ENCODE measurements at regions of chr13 and their contacts with region 1.

Region 1: DNA sequence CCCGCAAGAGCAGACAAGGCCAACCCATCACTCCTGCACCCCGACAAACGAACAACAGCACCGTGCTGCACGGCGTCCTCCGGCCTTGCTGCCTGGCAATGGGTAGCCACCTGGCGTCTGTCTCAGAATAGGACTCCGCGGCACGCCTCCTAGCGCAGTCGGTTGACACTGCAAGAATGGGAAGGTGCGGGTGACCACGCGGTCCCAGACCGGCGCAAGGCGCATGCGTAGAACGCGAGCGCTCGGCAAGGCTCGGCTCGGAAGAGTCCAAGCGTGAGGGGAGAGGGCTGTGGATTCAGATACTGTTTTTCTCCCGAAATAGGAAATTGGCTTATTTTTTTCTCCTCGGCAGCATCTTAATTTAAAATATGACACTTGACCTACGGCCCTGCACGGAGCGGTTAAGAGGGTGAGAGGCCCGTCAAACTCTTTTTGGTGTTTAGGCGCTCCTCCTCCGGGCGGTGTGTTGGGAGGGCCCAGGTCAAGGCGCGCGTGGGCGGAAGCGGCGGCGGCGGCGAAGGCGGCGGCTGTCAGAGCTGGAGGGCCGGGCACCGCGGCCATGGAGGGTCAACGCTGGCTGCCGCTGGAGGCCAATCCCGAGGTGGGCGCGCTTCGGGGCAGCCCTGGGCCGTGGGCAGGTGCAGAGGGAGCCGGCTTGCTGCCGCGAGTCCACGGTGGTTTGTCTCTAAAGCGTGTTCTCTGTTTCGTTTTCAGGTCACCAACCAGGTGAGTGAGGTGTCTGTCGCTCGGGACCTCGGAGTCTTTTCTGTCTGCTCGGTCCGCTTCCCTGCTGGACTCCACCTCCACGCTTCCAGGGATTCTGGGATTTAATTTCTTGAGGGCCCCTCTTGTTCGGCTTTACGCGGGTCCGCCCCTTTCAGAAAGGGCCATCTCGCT is at the start of gene UCHL3:
- DNase-seq: peak; percentile 89 to 94
- ATAC-seq: peak; percentile 99
- H3K4me3 ChIP-seq: peak within 1 kb of the TSS; percentile 82 to 98 (median 96)
- H3K27ac ChIP-seq: peak within 1 kb of the TSS; percentile 79 to 95 (median 94)
- H3K4me1 ChIP-seq: peaks cover 28 to 36% of the 10 kb centered on the region in 2 donors
- H3K27me3 ChIP-seq: no peaks in the 10 kb centered on the region
- CTCF ChIP-seq: peak; percentile 77 to 88 (median 84)
- POLR2A ChIP-seq: peak; percentile 81 to 82
- total RNA-seq, gene UCHL3: 40.2 to 67.5 (median 44.2) TPM

Region 2: GRCh38 chr13:75326173-75327134 is 223.1 kb before region 1 on chr13:
- in situ Hi-C with region 1: no loop called
- intact Hi-C with region 1: loop called (anchors 5 kb)
- DNase-seq: no peak
- ATAC-seq: peak; percentile 62 to 69
- H3K4me3 ChIP-seq: peak overlapping the region in 1 of 4 donors; percentile 1
- H3K27ac ChIP-seq: peak overlapping the region; percentile 36 to 68 (median 48)
- H3K4me1 ChIP-seq: peaks cover 12 to 26% of the 10 kb centered on the region in 2 donors
- H3K27me3 ChIP-seq: no peaks in the 10 kb centered on the region
- CTCF ChIP-seq: no peak
- POLR2A ChIP-seq: no peak

Region 3: DNA sequence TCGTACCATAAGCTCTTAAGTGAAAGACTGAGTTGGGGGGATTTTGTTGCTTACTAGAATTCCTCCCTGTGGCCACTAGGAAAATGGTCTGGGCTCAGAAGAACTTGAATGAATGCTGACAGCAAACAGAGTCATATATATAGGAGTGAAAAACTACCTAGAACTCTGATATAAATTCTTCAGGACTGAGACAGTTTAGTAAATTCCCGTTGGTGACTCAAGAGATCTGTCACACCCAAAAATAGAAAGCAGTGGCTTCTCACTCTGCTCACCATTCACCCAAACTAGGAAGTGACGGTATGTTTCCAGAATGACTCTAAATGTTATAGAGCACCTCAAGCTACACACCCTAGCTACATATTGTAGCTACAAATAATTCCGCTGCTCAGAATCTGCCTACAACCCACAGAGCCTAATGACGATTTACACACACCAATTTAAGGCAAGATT is 183.8 kb before region 1 on chr13:
- in situ Hi-C with region 1: loop called in 1 of 4 experiments (anchors 10 kb)
- intact Hi-C with region 1: loop called (anchors 2 kb)
- DNase-seq: no peak
- ATAC-seq: peak; percentile 88
- H3K4me3 ChIP-seq: peak overlapping the region; percentile 1 to 41 (median 32)
- H3K27ac ChIP-seq: peak overlapping the region; percentile 78 to 89 (median 84)
- H3K4me1 ChIP-seq: peaks cover 82 to 84% of the 10 kb centered on the region in 2 donors
- H3K27me3 ChIP-seq: no peaks in the 10 kb centered on the region
- CTCF ChIP-seq: peak in 1 of 5 experiments; percentile 48
- POLR2A ChIP-seq: no peak

Region 4: DNA sequence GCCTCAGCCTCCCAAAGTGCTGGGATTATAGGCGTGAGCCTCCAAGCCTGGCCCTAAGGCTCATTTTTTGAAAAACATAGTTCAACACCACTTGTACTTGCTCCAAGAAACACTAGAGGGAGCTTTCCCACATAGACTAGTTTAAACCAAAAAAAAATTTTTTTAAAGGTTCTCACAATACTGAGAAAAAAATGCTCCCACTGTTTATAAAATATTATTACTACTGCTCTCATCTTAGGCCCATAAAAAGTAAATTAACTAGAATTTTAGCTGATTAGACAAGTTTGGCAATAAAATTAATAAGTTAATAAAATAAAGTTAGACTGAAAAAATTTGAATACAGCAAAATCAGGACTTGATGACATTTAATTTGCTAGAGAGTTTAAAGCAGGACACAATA is 177.0 kb before region 1 on chr13:
- in situ Hi-C with region 1: loop called in 1 of 4 experiments (anchors 10 kb)
- intact Hi-C with region 1: loop called (anchors 2 kb)
- DNase-seq: no peak
- ATAC-seq: peak; percentile 40 to 45
- H3K4me3 ChIP-seq: peak overlapping the region in 2 of 4 donors; percentile 0 to 37
- H3K27ac ChIP-seq: peak overlapping the region; percentile 75 to 89 (median 80)
- H3K4me1 ChIP-seq: peaks cover 76 to 84% of the 10 kb centered on the region in 2 donors
- H3K27me3 ChIP-seq: no peaks in the 10 kb centered on the region
- CTCF ChIP-seq: peak; percentile 67 to 76 (median 70)
- POLR2A ChIP-seq: no peak

Region 5: GRCh38 chr13:75482070-75482819 is 67.3 kb before region 1 on chr13 and contains the start of gene TBC1D4:
- in situ Hi-C with region 1: no loop called
- intact Hi-C with region 1: loop called (anchors 2 kb)
- DNase-seq: peak; percentile 87 to 88
- ATAC-seq: peak; percentile 65 to 69
- H3K4me3 ChIP-seq: peak within 1 kb of the TSS; percentile 85 to 95 (median 94)
- H3K27ac ChIP-seq: peak within 1 kb of the TSS; percentile 90 to 98 (median 93)
- H3K4me1 ChIP-seq: peaks cover 22 to 47% of the 10 kb centered on the region in 2 donors
- H3K27me3 ChIP-seq: no peaks in the 10 kb centered on the region
- CTCF ChIP-seq: peak; percentile 68 to 93 (median 74)
- POLR2A ChIP-seq: peak; percentile 66 to 84
- total RNA-seq, gene TBC1D4: 49.9 to 279 (median 211) TPM

Region 6: DNA sequence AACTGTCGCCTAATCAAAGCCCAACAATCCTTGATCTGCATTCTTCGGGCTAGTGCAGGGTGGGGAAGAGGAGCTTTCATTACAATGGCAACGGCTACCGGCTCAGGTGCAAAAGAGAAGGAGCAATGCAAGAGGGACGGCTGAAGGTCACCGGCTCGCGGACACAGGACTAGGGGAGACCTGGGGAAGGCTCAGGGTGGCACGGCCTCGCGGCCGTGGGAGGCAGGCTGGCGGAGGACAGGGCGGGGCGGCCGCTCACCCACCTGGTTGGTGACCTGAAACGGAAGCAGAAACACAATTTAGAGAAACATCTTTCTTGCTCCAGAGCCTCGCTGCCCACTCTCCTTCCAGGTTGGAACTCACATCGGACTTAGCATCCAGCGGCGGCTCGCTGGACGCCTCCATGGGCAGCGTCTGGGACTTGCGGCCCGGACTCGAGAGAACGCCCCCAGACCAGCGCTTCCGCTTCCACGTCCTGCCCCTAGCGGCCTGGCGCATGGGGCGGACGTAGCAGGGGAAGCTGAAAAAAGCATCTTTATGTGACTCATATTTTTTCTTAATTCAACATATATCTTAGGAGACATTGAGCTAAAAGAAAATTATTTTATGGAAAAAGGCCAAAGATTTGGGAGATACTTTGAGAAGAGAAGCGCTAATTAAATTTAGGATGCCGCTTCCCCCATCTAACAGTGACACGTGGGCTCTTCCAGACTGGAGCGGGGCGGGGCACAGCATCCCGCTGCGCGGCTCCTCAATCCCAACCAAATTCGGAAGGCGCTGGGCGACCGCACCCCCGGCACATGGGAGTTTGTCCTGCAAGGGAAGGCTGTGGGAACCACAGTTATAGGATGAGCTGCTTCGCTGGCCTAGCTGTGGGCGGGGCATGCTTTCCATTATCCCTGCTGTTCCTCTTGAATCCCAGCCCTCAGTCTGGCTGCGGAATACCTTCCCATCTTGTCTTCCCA is 11.8 kb before region 1 on chr13 and contains the start of gene COMMD6:
- in situ Hi-C with region 1: no loop called
- intact Hi-C with region 1: loop called (anchors 1 kb)
- DNase-seq: peak; percentile 46 to 55
- ATAC-seq: peak; percentile 96 to 97
- H3K4me3 ChIP-seq: peak within 1 kb of the TSS; percentile 71 to 90 (median 82)
- H3K27ac ChIP-seq: peak within 1 kb of the TSS; percentile 76 to 87 (median 84)
- H3K4me1 ChIP-seq: peaks cover 10 to 13% of the 10 kb centered on the region in 2 donors
- H3K27me3 ChIP-seq: no peaks in the 10 kb centered on the region
- CTCF ChIP-seq: peak; percentile 41 to 81 (median 65)
- POLR2A ChIP-seq: peak; percentile 38 to 43
- total RNA-seq, gene COMMD6: 17.0 to 29.4 (median 20.4) TPM